ENCODE measurements at regions of chr1 and their contacts with region 1.

Region 1: DNA sequence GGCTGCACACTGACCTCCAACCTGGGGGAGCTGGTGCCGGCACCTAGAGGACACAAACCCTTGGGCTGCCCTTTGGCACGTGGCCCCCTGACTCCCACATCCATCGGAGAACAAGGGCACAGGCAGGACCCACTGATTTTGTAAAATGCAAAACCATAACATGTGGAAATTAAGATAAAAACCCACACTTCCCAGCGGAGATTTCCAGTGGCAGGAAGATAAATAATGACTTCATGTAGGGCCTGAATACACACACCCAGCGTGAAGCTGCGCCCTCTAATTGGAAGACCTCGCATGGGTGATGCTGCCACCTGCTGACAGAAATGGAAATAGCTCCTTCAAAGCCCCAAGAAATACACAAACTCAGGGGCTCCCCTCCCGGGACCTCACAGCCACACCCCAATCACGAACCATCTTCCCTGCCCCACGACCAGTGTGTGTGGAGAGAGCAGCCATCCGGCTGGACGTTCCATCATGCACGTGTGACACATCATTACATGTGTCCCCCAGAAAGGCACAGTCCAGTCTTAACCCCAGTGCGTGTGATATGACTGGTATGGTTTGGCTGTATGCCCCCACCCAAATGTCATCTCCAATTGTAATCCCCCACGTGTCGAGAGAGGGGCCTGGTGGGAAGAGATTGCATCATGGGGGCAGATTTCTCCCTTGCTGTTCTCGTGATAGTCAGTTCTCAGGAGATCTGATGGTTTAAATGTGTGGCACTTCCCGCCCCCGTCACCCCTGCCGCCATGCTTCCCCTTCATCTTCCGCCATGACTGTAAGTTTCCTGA is 5.7 kb upstream of the TPRG1L start:
- DNase-seq: peak; percentile 51 to 88 (median 79)
- ATAC-seq: peak; percentile 97
- H3K4me3 ChIP-seq: no peak overlapping the region
- H3K4me3 Mint-ChIP-seq: no peak overlapping the region
- H3K27ac ChIP-seq: no peak overlapping the region
- H3K27ac Mint-ChIP-seq: peak overlapping the region; percentile 21
- H3K4me1 ChIP-seq: peaks cover 22% of the 10 kb centered on the region
- H3K4me1 Mint-ChIP-seq: peaks cover 34% of the 10 kb centered on the region
- H3K27me3 ChIP-seq: peaks cover 0 to 2% of the 10 kb centered on the region in 2 experiments
- H3K27me3 Mint-ChIP-seq: peaks cover 2% of the 10 kb centered on the region
- CTCF ChIP-seq: peak; percentile 81

Region 2: GRCh38 chr1:3453203-3453761 is 165.8 kb before region 1 on chr1:
- CTCF ChIA-PET with region 1: interaction called, 49 read pairs
- POLR2A ChIA-PET with region 1: no interaction called
- intact Hi-C with region 1: loop called in 1 of 2 experiments (anchors 1 kb)
- DNase-seq: peak; percentile 51 to 85 (median 74)
- ATAC-seq: peak; percentile 89
- H3K4me3 ChIP-seq: no peak overlapping the region
- H3K4me3 Mint-ChIP-seq: peak overlapping the region; percentile 76
- H3K27ac ChIP-seq: no peak overlapping the region
- H3K27ac Mint-ChIP-seq: no peak overlapping the region
- H3K4me1 ChIP-seq: peaks cover 11% of the 10 kb centered on the region
- H3K4me1 Mint-ChIP-seq: no peaks in the 10 kb centered on the region
- H3K27me3 ChIP-seq: peaks cover 7 to 15% of the 10 kb centered on the region in 2 experiments
- H3K27me3 Mint-ChIP-seq: peaks cover 17% of the 10 kb centered on the region
- CTCF ChIP-seq: peak; percentile 79

Region 3: DNA sequence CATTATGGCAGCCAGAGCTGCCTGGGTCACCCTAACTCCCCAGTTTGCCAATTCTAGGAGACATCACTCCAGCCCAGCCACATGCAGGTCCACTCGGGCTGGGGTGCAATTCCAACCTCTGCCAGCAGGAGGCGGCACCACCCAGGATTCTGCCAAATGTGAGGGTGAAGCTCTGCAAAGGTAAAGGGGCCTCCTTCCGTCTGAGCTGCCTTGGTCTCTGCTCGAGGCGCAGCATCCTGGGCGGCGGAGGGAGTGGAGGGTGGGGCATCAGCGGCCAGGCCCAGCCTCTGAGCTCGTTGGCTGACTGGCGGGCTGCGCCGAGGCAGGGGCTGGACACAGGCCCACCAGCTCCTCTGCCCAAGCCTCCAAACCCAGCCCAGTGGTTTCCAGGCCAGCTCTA is 100.8 kb before region 1 on chr1:
- CTCF ChIA-PET with region 1: interaction called, 12 read pairs
- POLR2A ChIA-PET with region 1: no interaction called
- intact Hi-C with region 1: loop called in 1 of 2 experiments (anchors 1 kb)
- DNase-seq: peak in 5 of 9 experiments; percentile 17 to 61 (median 37)
- ATAC-seq: peak; percentile 31
- H3K4me3 ChIP-seq: no peak overlapping the region
- H3K4me3 Mint-ChIP-seq: no peak overlapping the region
- H3K27ac ChIP-seq: no peak overlapping the region
- H3K27ac Mint-ChIP-seq: no peak overlapping the region
- H3K4me1 ChIP-seq: no peaks in the 10 kb centered on the region
- H3K4me1 Mint-ChIP-seq: no peaks in the 10 kb centered on the region
- H3K27me3 ChIP-seq: no peaks in the 10 kb centered on the region
- H3K27me3 Mint-ChIP-seq: no peaks in the 10 kb centered on the region
- CTCF ChIP-seq: peak; percentile 61

Region 4: GRCh38 chr1:3588395-3588794 is 30.7 kb before region 1 on chr1:
- CTCF ChIA-PET with region 1: interaction called, 9 read pairs
- POLR2A ChIA-PET with region 1: no interaction called
- intact Hi-C with region 1: loop called in 1 of 2 experiments (anchors 2 kb)
- DNase-seq: peak in 1 of 9 experiments; percentile 17
- ATAC-seq: no peak
- H3K4me3 ChIP-seq: no peak overlapping the region
- H3K4me3 Mint-ChIP-seq: no peak overlapping the region
- H3K27ac ChIP-seq: no peak overlapping the region
- H3K27ac Mint-ChIP-seq: no peak overlapping the region
- H3K4me1 ChIP-seq: no peaks in the 10 kb centered on the region
- H3K4me1 Mint-ChIP-seq: no peaks in the 10 kb centered on the region
- H3K27me3 ChIP-seq: no peaks in the 10 kb centered on the region
- H3K27me3 Mint-ChIP-seq: no peaks in the 10 kb centered on the region
- CTCF ChIP-seq: no peak

Region 5: GRCh38 chr1:3630161-3630611 is 11.1 kb after region 1 on chr1:
- CTCF ChIA-PET with region 1: interaction called, 20 read pairs
- POLR2A ChIA-PET with region 1: no interaction called
- intact Hi-C with region 1: no loop called
- DNase-seq: no peak
- ATAC-seq: no peak
- H3K4me3 ChIP-seq: no peak overlapping the region
- H3K4me3 Mint-ChIP-seq: no peak overlapping the region
- H3K27ac ChIP-seq: no peak overlapping the region
- H3K27ac Mint-ChIP-seq: no peak overlapping the region
- H3K4me1 ChIP-seq: peaks cover 10% of the 10 kb centered on the region
- H3K4me1 Mint-ChIP-seq: peaks cover 8% of the 10 kb centered on the region
- H3K27me3 ChIP-seq: no peaks in the 10 kb centered on the region
- H3K27me3 Mint-ChIP-seq: no peaks in the 10 kb centered on the region
- CTCF ChIP-seq: no peak

Measured in CD8-positive, alpha-beta T cell (primary cell).